Colonic mucosa (tissue), 4 donors: ENCODE measurements at regions of chr4 and their contacts with region 1.

Region 1: DNA sequence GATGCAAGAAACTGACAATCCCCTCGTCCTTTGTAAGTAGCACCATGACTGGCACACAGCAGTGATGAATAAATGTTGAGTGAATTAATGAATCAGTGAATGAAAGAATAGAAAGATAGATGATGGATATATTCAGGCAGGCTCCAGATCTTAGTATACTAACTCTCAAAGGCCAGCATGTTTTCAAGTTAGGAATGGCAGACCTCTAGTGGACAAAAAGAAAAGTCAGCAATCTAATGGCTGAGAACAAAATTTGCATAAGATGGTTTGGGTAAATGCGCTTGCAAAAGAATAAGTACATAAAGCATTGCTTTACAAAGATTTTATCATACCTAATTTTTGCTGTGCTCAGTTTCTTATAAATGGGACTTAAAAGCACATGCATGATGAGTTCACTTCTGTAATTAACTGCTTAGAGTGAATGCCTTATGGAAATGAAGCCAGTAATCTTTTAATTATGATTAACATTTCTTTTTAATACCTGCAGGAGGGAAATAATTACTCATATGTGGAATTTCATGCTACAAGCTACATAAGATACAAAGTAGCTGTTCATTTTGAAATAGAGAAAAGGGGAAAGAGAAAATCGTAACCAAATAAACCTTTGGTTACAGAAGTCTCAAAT is 126.9 kb upstream of the GPRIN3 start:
- DNase-seq: no peak
- H3K4me3 ChIP-seq: no peak overlapping the region
- H3K27ac ChIP-seq: no peak overlapping the region
- H3K4me1 ChIP-seq: no peaks in the 10 kb centered on the region
- H3K27me3 ChIP-seq: no peaks in the 10 kb centered on the region
- CTCF ChIP-seq: peak; percentile 73

Region 2: GRCh38 chr4:87811977-87812376 is 1622.5 kb before region 1 on chr4:
- intact Hi-C with region 1: no loop called
- DNase-seq: no peak
- H3K4me3 ChIP-seq: no peak overlapping the region
- H3K27ac ChIP-seq: no peak overlapping the region
- H3K4me1 ChIP-seq: no peaks in the 10 kb centered on the region
- H3K27me3 ChIP-seq: no peaks in the 10 kb centered on the region
- CTCF ChIP-seq: no peak

Region 3: GRCh38 chr4:89158884-89159503 is 275.5 kb before region 1 on chr4:
- intact Hi-C with region 1: loop called (anchors 2 kb)
- DNase-seq: no peak
- H3K4me3 ChIP-seq: no peak overlapping the region
- H3K27ac ChIP-seq: no peak overlapping the region
- H3K4me1 ChIP-seq: no peaks in the 10 kb centered on the region
- H3K27me3 ChIP-seq: no peaks in the 10 kb centered on the region
- CTCF ChIP-seq: peak; percentile 79

Region 4: GRCh38 chr4:89226665-89227574 is 207.6 kb before region 1 on chr4:
- intact Hi-C with region 1: loop called (anchors 2 kb)
- DNase-seq: peak; percentile 94
- H3K4me3 ChIP-seq: no peak overlapping the region
- H3K27ac ChIP-seq: peak overlapping the region; percentile 14
- H3K4me1 ChIP-seq: no peaks in the 10 kb centered on the region
- H3K27me3 ChIP-seq: no peaks in the 10 kb centered on the region
- CTCF ChIP-seq: peak; percentile 68

Region 5: DNA sequence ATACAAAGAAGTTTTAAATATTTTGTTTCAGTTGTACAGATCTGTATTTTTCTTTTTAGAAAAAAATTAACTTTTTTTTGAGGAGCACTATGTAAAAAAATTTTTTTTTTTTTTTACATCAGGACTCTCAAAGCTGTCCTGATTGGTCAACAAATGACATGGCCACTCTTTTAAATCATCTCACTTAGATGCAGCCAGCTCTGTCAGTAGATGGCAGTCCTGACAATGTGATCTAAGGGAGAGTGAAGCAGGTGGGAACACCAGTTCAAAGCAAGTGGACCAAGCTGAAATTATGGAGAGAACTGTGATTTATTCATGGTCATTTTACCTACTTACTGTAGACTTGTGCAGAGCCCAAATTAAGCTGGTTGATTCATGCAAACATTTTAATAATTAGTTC is 47.8 kb after region 1 on chr4:
- intact Hi-C with region 1: no loop called
- DNase-seq: no peak
- H3K4me3 ChIP-seq: no peak overlapping the region
- H3K27ac ChIP-seq: no peak overlapping the region
- H3K4me1 ChIP-seq: no peaks in the 10 kb centered on the region
- H3K27me3 ChIP-seq: no peaks in the 10 kb centered on the region
- CTCF ChIP-seq: no peak